PC-3 (cell line): ENCODE measurements at regions of chr12 and their contacts with region 1.

Region 1: GRCh38 chr12:111434049-111434448 is 28.3 kb downstream of the SH2B3 start:
- DNase-seq: no peak
- ATAC-seq: peak; percentile 25
- H3K4me3 ChIP-seq: no peak overlapping the region
- H3K27ac ChIP-seq: 0 out of 2 replicates have a peak overlapping the region, but pooled peaks have one; percentile 1
- H3K4me1 ChIP-seq: peaks cover 34% of the 10 kb centered on the region
- H3K27me3 ChIP-seq: no peaks in the 10 kb centered on the region
- CTCF ChIP-seq: no peak

Region 2: DNA sequence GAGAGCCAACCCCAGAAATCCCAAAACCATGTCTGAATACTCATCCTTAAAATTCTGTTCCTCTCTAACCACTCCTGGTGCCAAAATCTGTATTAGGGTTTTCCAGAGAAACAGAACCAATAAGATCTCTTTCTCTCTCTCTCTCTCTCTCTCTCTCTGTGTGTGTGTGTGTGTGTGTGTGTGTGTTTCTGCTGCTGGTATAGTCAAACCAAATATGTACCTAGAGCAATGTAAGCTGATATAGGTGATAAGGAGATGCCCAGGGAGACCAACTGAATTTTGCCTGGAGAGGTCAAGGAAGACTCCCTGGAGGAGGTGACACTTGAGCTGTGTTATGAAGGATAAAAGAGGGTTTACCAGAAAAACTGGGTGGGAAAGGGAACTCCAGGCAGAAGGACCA is 299.6 kb before region 1 on chr12:
- CTCF ChIA-PET with region 1: interaction called, 11 read pairs
- POLR2A ChIA-PET with region 1: no interaction called
- intact Hi-C with region 1: no loop called
- DNase-seq: no peak
- ATAC-seq: no peak
- H3K4me3 ChIP-seq: no peak overlapping the region
- H3K27ac ChIP-seq: no peak overlapping the region
- H3K4me1 ChIP-seq: no peaks in the 10 kb centered on the region
- H3K27me3 ChIP-seq: peaks cover 20% of the 10 kb centered on the region
- CTCF ChIP-seq: no peak

Region 3: GRCh38 chr12:111462210-111462769 is 28.2 kb after region 1 on chr12:
- CTCF ChIA-PET with region 1: no interaction called
- POLR2A ChIA-PET with region 1: no interaction called
- intact Hi-C with region 1: no loop called
- DNase-seq: no peak
- ATAC-seq: no peak
- H3K4me3 ChIP-seq: no peak overlapping the region
- H3K27ac ChIP-seq: no peak overlapping the region
- H3K4me1 ChIP-seq: no peaks in the 10 kb centered on the region
- H3K27me3 ChIP-seq: no peaks in the 10 kb centered on the region
- CTCF ChIP-seq: no peak